CD4-positive, alpha-beta T cell (primary cell): ENCODE measurements at regions of chr2 and their contacts with region 1.

Region 1: DNA sequence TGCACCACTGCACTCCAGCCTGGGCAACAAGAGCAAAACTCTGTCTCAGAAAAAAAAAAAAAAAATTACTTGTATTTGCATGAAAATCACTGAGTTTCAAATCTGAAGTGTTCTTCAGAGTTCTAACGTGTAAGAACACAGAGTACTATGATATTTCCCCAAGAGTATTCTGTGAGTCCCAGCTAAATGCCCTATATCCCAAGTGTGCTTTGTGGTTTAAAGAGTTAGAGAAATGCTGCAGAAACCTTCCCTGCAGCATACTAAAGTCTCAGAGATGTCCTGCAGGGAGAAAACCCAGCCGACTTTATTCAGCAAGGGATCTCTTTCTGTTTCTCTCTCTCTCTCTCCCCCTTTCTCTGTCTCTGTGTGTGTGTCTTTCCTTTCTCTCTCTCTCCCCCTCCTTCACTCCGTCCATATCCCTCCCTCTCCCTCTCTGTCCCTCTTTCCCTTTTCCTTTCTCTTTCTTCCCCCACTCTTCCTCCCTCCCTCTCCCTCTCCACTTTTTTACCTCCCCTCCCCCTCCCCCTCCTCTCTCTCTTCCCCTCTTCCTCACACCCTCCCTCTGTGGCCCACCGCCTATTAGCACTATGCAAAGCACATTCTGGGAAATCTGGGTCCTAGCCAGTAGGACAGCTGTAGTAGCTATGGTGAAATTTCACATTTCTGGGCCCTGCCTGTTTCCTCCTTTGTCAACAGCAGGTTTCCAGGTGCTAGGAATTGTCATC is 54.2 kb downstream of the ACTR2 start:
- DNase-seq: no peak
- ATAC-seq: no peak
- H3K4me3 ChIP-seq: no peak overlapping the region
- H3K4me3 Mint-ChIP-seq: no peak overlapping the region
- H3K27ac ChIP-seq: no peak overlapping the region
- H3K27ac Mint-ChIP-seq: no peak overlapping the region
- H3K4me1 ChIP-seq: peaks cover 13% of the 10 kb centered on the region
- H3K4me1 Mint-ChIP-seq: peaks cover 13% of the 10 kb centered on the region
- H3K27me3 ChIP-seq: no peaks in the 10 kb centered on the region
- H3K27me3 Mint-ChIP-seq: no peaks in the 10 kb centered on the region
- CTCF ChIP-seq: no peak

Region 2: GRCh38 chr2:64779117-64779690 is 502.6 kb before region 1 on chr2:
- CTCF ChIA-PET with region 1: no interaction called
- POLR2A ChIA-PET with region 1: no interaction called
- intact Hi-C with region 1: no loop called
- DNase-seq: no peak
- ATAC-seq: no peak
- H3K4me3 ChIP-seq: no peak overlapping the region
- H3K4me3 Mint-ChIP-seq: no peak overlapping the region
- H3K27ac ChIP-seq: no peak overlapping the region
- H3K27ac Mint-ChIP-seq: no peak overlapping the region
- H3K4me1 ChIP-seq: no peaks in the 10 kb centered on the region
- H3K4me1 Mint-ChIP-seq: no peaks in the 10 kb centered on the region
- H3K27me3 ChIP-seq: no peaks in the 10 kb centered on the region
- H3K27me3 Mint-ChIP-seq: no peaks in the 10 kb centered on the region
- CTCF ChIP-seq: no peak

Region 3: GRCh38 chr2:65350684-65351083 is 68.9 kb after region 1 on chr2:
- CTCF ChIA-PET with region 1: interaction called, 3 read pairs
- POLR2A ChIA-PET with region 1: no interaction called
- intact Hi-C with region 1: loop called in 1 of 2 experiments (anchors 10 kb)
- DNase-seq: peak in 1 of 14 experiments; percentile 14
- ATAC-seq: no peak
- H3K4me3 ChIP-seq: no peak overlapping the region
- H3K4me3 Mint-ChIP-seq: no peak overlapping the region
- H3K27ac ChIP-seq: no peak overlapping the region
- H3K27ac Mint-ChIP-seq: no peak overlapping the region
- H3K4me1 ChIP-seq: no peaks in the 10 kb centered on the region
- H3K4me1 Mint-ChIP-seq: peaks cover 7% of the 10 kb centered on the region
- H3K27me3 ChIP-seq: no peaks in the 10 kb centered on the region
- H3K27me3 Mint-ChIP-seq: no peaks in the 10 kb centered on the region
- CTCF ChIP-seq: no peak